GM10248 (cell line): ENCODE measurements at regions of chr14 and their contacts with region 1.

Region 1: DNA sequence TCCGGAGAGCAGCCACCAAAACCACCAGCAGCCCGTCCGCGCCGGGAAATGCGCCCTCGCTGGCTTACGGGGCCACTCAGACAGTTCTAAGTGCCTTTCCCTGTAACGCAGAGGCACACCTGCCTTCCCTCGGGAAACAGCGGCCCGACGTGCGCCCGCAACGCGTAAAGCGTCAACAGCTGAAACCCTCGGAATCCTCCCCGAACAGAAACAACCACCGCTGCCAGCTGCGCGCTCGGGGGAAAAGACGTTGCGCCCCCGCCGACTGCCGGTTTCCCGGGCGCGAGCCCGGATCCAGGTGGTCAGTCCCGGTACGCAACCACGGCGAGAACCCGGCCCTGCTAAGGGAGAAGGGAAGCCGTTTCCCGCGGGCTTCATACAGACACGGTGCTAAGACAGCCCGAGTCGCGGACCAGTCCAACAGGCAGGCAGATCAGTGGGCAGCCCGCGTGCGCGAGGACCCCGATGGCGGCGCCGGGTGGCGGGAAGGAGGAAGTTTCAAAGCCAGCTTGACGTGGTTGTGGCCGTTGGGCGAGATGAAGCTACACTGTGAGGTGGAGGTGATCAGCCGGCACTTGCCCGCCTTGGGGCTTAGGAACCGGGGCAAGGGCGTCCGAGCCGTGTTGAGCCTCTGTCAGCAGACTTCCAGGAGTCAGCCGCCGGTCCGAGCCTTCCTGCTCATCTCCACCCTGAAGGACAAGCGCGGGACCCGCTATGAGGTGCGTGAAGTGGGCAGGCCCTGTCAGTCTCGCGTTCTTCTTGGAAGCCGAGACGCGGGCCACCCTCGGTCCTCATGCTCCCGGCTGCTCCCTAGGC is at the start of gene LRR1:
- DNase-seq: peak; percentile 82
- CTCF ChIP-seq: no peak

Region 2: DNA sequence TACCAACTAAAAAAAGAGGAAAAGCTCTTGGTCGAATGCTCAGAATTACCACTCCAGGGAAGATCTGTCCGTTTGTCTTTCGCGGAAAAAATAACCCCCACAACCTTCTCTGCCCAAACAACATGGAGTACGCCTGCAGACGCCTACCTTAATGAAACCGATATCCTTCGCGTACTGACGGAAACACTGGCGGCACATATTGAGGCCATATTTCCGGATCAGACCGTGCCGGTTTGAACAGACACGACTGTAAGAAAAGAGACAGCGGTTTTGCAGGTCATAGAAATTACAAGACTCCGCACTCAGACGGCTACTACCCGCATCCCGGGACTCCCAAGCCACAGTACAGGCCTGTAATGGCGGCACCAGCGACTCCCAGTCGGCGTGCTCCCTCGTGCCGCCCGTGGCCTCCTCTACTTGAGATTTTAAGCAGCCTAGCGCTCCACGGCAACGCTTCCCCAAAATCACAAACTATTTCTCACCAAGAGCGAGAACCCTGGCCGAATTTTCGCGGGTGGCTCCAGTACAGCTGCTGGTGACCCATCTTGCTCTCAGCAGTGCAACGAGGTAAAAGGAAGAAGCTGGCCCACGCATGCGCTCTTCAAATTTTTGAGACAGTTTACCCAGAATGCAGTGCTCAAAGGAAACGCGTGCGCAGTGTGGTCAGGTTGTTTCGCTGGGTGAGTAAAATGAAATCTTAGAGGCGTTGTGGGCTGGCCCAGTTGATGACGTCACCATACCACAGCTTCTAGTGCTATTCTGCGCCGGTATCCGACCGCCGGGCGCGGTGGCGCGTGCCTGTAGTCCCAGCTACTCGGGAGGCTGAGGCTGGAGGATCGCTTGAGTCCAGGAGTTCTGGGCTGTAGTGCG is 12.7 kb before region 1 on chr14 and contains the start of gene RPS29:
- CTCF ChIA-PET with region 1: interaction called, 44 read pairs
- POLR2A ChIA-PET with region 1: interaction called, 11 read pairs
- DNase-seq: peak; percentile 93
- CTCF ChIP-seq: no peak

Region 3: GRCh38 chr14:49620182-49621113 is 21.8 kb after region 1 on chr14 and contains the starts of genes MGAT2 and RPL36AL:
- CTCF ChIA-PET with region 1: interaction called, 9 read pairs
- POLR2A ChIA-PET with region 1: interaction called, 11 read pairs
- DNase-seq: peak; percentile 97
- CTCF ChIP-seq: peak; percentile 17

Region 4: GRCh38 chr14:50018201-50018932 is 419.7 kb after region 1 on chr14:
- CTCF ChIA-PET with region 1: no interaction called
- POLR2A ChIA-PET with region 1: interaction called, 10 read pairs
- DNase-seq: no peak
- CTCF ChIP-seq: no peak